Thyroid gland (tissue), 4 donors: ENCODE measurements at regions of chr2 and their contacts with region 1.

Region 1: GRCh38 chr2:207625018-207625907 is at the start of gene METTL21A:
- DNase-seq: peak; percentile 90 to 92
- H3K4me3 ChIP-seq: peak within 1 kb of the TSS; percentile 38 to 97 (median 85)
- H3K27ac ChIP-seq: peak within 1 kb of the TSS; percentile 94 to 98 (median 98)
- H3K4me1 ChIP-seq: peaks cover 11 to 18% of the 10 kb centered on the region in 2 donors
- H3K27me3 ChIP-seq: no peaks in the 10 kb centered on the region
- CTCF ChIP-seq: peak in 4 of 6 experiments; percentile 18 to 49 (median 39)
- POLR2A ChIP-seq: peak; percentile 66 to 90
- total RNA-seq, gene METTL21A: 24.6 to 48.9 (median 36.0) TPM

Region 2: GRCh38 chr2:207529330-207530159 is 95.7 kb before region 1 on chr2 and contains the start of gene CREB1:
- intact Hi-C with region 1: loop called (anchors 5 kb)
- DNase-seq: peak; percentile 98 to 99
- H3K4me3 ChIP-seq: peak within 1 kb of the TSS; percentile 53 to 82 (median 79)
- H3K27ac ChIP-seq: peak within 1 kb of the TSS; percentile 97 to 98 (median 97)
- H3K4me1 ChIP-seq: peaks cover 30 to 34% of the 10 kb centered on the region in 2 donors
- H3K27me3 ChIP-seq: no peaks in the 10 kb centered on the region
- CTCF ChIP-seq: peak in 1 of 6 experiments; percentile 18
- POLR2A ChIP-seq: peak; percentile 70 to 99
- total RNA-seq, gene CREB1: 56.1 to 105 (median 59.2) TPM

Region 3: GRCh38 chr2:207710814-207711740 is 85.8 kb after region 1 on chr2 and contains the start of gene CCNYL1:
- intact Hi-C with region 1: loop called (anchors 10 kb)
- DNase-seq: peak; percentile 99
- H3K4me3 ChIP-seq: peak within 1 kb of the TSS; percentile 71 to 86 (median 86)
- H3K27ac ChIP-seq: peak within 1 kb of the TSS; percentile 82 to 91 (median 88)
- H3K4me1 ChIP-seq: peaks cover 11 to 18% of the 10 kb centered on the region in 2 donors
- H3K27me3 ChIP-seq: no peaks in the 10 kb centered on the region
- CTCF ChIP-seq: peak in 4 of 6 experiments; percentile 16 to 57 (median 32)
- POLR2A ChIP-seq: peak in 1 of 2 donors; percentile 98
- total RNA-seq, gene CCNYL1: 14.8 to 22.2 (median 17.9) TPM

Region 4: GRCh38 chr2:208040199-208041171 is 415.2 kb after region 1 on chr2:
- intact Hi-C with region 1: loop called (anchors 10 kb)
- DNase-seq: peak; percentile 70 to 79
- H3K4me3 ChIP-seq: no peak overlapping the region
- H3K27ac ChIP-seq: peak overlapping the region; percentile 56 to 65 (median 65)
- H3K4me1 ChIP-seq: peaks cover 6 to 17% of the 10 kb centered on the region in 2 donors
- H3K27me3 ChIP-seq: no peaks in the 10 kb centered on the region
- CTCF ChIP-seq: peak; percentile 23 to 77 (median 63)
- POLR2A ChIP-seq: no peak